Activated naive CD4-positive, alpha-beta T cell treated with anti-CD3 and anti-CD28 coated beads for 36 hours (primary cell): ENCODE measurements at regions of chr12 and their contacts with region 1.

Region 1: DNA sequence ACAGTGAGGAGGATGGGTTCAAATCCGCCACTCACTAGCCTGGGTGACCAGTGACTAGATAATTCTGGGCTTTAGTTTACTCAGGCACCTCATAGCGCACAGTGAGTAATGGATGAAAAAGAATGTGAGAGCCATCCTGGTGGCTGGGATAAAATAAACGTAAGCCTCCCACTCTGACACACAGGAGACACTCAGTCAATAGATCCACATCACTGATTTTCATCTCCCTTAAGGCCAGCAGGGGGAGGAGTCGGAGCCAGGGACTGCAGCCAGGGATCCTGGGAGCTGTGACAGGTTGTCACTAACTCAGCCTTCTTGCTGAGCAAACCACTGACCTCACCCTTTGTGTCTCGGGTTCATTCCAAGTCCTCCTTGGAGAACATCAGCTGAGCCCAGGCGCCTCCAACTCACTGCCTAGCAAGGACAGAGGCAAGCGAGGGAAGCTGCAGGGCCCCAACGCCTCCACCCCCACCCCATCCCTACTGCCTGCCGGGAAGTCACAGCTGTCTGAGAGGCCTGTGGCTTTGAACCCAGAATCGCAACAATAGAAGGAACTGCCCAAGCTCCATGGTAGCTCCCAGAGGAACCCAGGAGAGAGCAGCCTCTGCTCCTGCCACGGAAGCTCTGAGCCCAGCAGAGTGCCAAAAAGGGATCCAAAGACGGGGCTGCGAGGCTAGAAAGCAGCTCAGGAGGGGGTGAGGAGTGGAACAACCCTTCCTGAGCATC is 30.7 kb downstream of the PXN start:
- DNase-seq: peak; percentile 12
- H3K4me3 Mint-ChIP-seq: no peak overlapping the region
- H3K27ac Mint-ChIP-seq: peak overlapping the region; percentile 97
- H3K4me1 Mint-ChIP-seq: peaks cover 87% of the 10 kb centered on the region
- H3K27me3 Mint-ChIP-seq: no peaks in the 10 kb centered on the region

Region 2: DNA sequence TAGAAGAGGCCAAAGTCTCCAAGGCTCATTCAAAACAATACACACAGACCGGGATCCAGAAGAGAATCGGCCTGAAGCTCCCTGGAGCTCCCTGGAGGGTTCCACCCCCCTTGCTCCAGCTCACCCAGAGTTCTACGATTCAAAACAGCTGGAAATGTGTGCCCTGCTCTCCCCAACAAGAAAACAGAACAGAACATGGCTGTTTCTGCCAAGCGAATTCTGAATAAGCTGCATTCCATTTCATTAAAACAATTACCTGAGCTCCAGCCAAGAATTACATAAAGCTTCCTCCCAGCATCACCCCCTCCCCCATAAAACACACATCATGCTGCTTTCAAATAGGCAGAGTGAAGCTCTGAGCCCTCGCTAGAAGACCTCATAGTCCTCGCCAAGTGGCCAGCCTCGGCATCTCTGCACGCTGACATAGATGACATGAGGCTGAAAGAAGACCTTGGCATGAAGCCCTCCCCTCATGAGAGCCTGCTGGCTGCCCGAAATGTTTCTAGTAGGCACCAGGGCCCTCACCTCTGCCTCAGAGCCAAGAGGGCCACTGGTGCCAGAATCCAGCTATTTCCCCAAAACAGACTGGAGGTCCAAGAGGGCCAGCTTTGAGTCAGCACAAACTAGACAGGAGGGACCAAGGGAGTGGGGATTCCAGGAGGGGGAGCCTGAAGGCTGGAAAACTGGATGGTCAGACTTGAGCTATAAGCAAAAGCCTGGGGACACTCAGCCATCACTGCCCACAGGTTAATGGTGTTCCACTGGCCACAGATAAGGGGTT is 22.4 kb after region 1 on chr12:
- CTCF ChIA-PET with region 1: interaction called, 637 read pairs
- intact Hi-C with region 1: loop called (anchors 1 kb)
- DNase-seq: no peak
- H3K4me3 Mint-ChIP-seq: no peak overlapping the region
- H3K27ac Mint-ChIP-seq: peak overlapping the region; percentile 76
- H3K4me1 Mint-ChIP-seq: peaks cover 85% of the 10 kb centered on the region
- H3K27me3 Mint-ChIP-seq: no peaks in the 10 kb centered on the region

Region 3: GRCh38 chr12:121038861-121039666 is 804.3 kb after region 1 on chr12 and contains the start of gene OASL:
- CTCF ChIA-PET with region 1: no interaction called
- intact Hi-C with region 1: loop called (anchors 10 kb)
- DNase-seq: peak; percentile 55
- H3K4me3 Mint-ChIP-seq: peak within 1 kb of the TSS; percentile 75
- H3K27ac Mint-ChIP-seq: peak within 1 kb of the TSS; percentile 70
- H3K4me1 Mint-ChIP-seq: peaks cover 50% of the 10 kb centered on the region
- H3K27me3 Mint-ChIP-seq: peaks cover 8% of the 10 kb centered on the region
- total RNA-seq, gene OASL: 12.4 to 13.4 TPM